ENCODE measurements at regions of chr7 and their contacts with region 1.

Region 1: DNA sequence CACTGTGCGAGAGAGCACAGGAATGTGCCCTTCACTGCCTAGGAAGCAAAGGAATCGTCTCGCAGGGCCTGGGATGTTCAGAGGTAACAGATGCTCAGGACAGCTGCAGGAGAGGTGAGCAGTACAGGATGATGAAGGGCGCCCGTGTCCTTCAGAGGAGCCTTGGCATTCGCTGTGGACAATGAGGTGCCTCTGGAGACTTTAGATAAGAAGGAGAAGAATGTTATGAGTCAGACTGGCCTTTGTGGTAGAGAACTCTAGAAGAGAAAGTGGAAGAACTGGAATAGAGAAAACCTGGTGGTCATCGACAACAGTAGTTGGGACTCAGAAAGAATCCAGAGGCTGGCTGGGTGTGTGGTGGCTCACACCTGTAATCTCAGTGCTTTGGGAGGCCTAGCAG is 64.4 kb upstream of the LEP start:
- DNase-seq: no peak
- H3K4me3 ChIP-seq: no peak overlapping the region
- H3K27ac ChIP-seq: no peak overlapping the region
- H3K4me1 ChIP-seq: no peaks in the 10 kb centered on the region
- H3K27me3 ChIP-seq: peaks cover 37% of the 10 kb centered on the region
- CTCF ChIP-seq: no peak
- EP300 ChIP-seq: no peak
- POLR2A ChIP-seq: no peak

Region 2: GRCh38 chr7:129728875-129729467 is 1552.3 kb after region 1 on chr7:
- in situ Hi-C with region 1: no loop called
- intact Hi-C with region 1: loop called (anchors 5 kb)
- DNase-seq: peak; percentile 77
- H3K4me3 ChIP-seq: no peak overlapping the region
- H3K27ac ChIP-seq: peak overlapping the region in 2 of 4 donors; percentile 20 to 46
- H3K4me1 ChIP-seq: peaks cover 0 to 14% (median 7%) of the 10 kb centered on the region in 4 donors
- H3K27me3 ChIP-seq: no peaks in the 10 kb centered on the region
- CTCF ChIP-seq: no peak
- EP300 ChIP-seq: no peak
- POLR2A ChIP-seq: no peak